ENCODE measurements at regions of chr20 and their contacts with region 1.

Region 1: GRCh38 chr20:53773792-53774401 is 180.3 kb upstream of the ZNF217 start:
- DNase-seq: no peak
- H3K4me3 ChIP-seq: no peak overlapping the region
- H3K27ac ChIP-seq: peak overlapping the region; percentile 68 to 72
- H3K4me1 ChIP-seq: peaks cover 0 to 12% of the 10 kb centered on the region in 2 donors
- H3K27me3 ChIP-seq: no peaks in the 10 kb centered on the region
- CTCF ChIP-seq: no peak

Region 2: GRCh38 chr20:53594068-53595017 is 179.6 kb before region 1 on chr20:
- intact Hi-C with region 1: loop called (anchors 5 kb)
- DNase-seq: peak; percentile 64 to 98
- H3K4me3 ChIP-seq: peak overlapping the region; percentile 92 to 98
- H3K27ac ChIP-seq: peak overlapping the region; percentile 95 to 99
- H3K4me1 ChIP-seq: peaks cover 0 to 13% of the 10 kb centered on the region in 2 donors
- H3K27me3 ChIP-seq: no peaks in the 10 kb centered on the region
- CTCF ChIP-seq: no peak

Region 3: GRCh38 chr20:53677447-53678314 is 96.2 kb before region 1 on chr20:
- intact Hi-C with region 1: loop called (anchors 5 kb)
- DNase-seq: peak in 1 of 2 donors; percentile 63
- H3K4me3 ChIP-seq: no peak overlapping the region
- H3K27ac ChIP-seq: no peak overlapping the region
- H3K4me1 ChIP-seq: peaks cover 0 to 4% of the 10 kb centered on the region in 2 donors
- H3K27me3 ChIP-seq: no peaks in the 10 kb centered on the region
- CTCF ChIP-seq: no peak

Region 4: DNA sequence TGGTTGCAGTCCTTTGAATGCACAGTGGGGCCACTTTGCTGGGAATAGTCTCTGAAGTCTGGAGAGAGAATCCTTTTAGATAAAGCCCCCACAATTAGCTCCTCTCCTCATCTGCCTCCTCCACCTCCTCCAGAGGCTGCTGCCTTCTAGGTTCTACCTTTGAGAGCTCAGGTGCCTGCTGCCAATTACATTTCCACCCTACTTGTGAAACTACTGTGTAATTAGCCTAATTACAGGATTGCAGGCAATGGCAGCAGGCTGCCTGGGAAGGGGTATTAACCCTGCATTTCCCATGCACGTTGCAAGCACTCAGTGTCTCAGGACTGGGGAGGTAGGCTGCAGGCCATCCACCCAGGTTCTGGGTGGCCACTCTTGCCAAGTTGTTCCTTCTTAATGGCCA is 35.3 kb after region 1 on chr20:
- intact Hi-C with region 1: no loop called
- DNase-seq: no peak
- H3K4me3 ChIP-seq: no peak overlapping the region
- H3K27ac ChIP-seq: no peak overlapping the region
- H3K4me1 ChIP-seq: no peaks in the 10 kb centered on the region
- H3K27me3 ChIP-seq: no peaks in the 10 kb centered on the region
- CTCF ChIP-seq: no peak

Measured in ascending aorta (tissue), 2 donors.